Heart right ventricle (tissue), 16 donors: ENCODE measurements at regions of chr11 and their contacts with region 1.

Region 1: GRCh38 chr11:21148376-21148775 is 479.0 kb downstream of the NELL1 start:
- DNase-seq: no peak
- ATAC-seq: no peak
- H3K4me3 ChIP-seq: no peak overlapping the region
- H3K27ac ChIP-seq: no peak overlapping the region
- H3K4me1 ChIP-seq: no peaks in the 10 kb centered on the region
- H3K27me3 ChIP-seq: no peaks in the 10 kb centered on the region
- CTCF ChIP-seq: no peak

Region 2: GRCh38 chr11:20840341-20840740 is 308.0 kb before region 1 on chr11:
- intact Hi-C with region 1: no loop called
- DNase-seq: no peak
- ATAC-seq: no peak
- H3K4me3 ChIP-seq: no peak overlapping the region
- H3K27ac ChIP-seq: no peak overlapping the region
- H3K4me1 ChIP-seq: no peaks in the 10 kb centered on the region
- H3K27me3 ChIP-seq: no peaks in the 10 kb centered on the region
- CTCF ChIP-seq: no peak

Region 3: GRCh38 chr11:21088930-21089329 is 59.4 kb before region 1 on chr11:
- intact Hi-C with region 1: loop called in 1 of 10 experiments (anchors 10 kb)
- DNase-seq: no peak
- ATAC-seq: no peak
- H3K4me3 ChIP-seq: no peak overlapping the region
- H3K27ac ChIP-seq: no peak overlapping the region
- H3K4me1 ChIP-seq: no peaks in the 10 kb centered on the region
- H3K27me3 ChIP-seq: no peaks in the 10 kb centered on the region
- CTCF ChIP-seq: no peak